ENCODE measurements at regions of chr10 and their contacts with region 1.

Region 1: GRCh38 chr10:26969145-26969926 is 108.6 kb upstream of the ABI1 start:
- DNase-seq: no peak
- H3K4me3 Mint-ChIP-seq: no peak overlapping the region
- H3K27ac Mint-ChIP-seq: peak overlapping the region; percentile 56
- H3K4me1 Mint-ChIP-seq: peaks cover 29% of the 10 kb centered on the region
- H3K27me3 Mint-ChIP-seq: no peaks in the 10 kb centered on the region

Region 2: GRCh38 chr10:27019827-27020226 is 50.5 kb after region 1 on chr10:
- intact Hi-C with region 1: loop called (anchors 5 kb)
- DNase-seq: no peak
- H3K4me3 Mint-ChIP-seq: no peak overlapping the region
- H3K27ac Mint-ChIP-seq: no peak overlapping the region
- H3K4me1 Mint-ChIP-seq: peaks cover 16% of the 10 kb centered on the region
- H3K27me3 Mint-ChIP-seq: no peaks in the 10 kb centered on the region

Region 3: GRCh38 chr10:27035163-27035562 is 65.8 kb after region 1 on chr10:
- intact Hi-C with region 1: loop called (anchors 2 kb)
- DNase-seq: no peak
- H3K4me3 Mint-ChIP-seq: peak overlapping the region; percentile 76
- H3K27ac Mint-ChIP-seq: peak overlapping the region; percentile 79
- H3K4me1 Mint-ChIP-seq: peaks cover 21% of the 10 kb centered on the region
- H3K27me3 Mint-ChIP-seq: no peaks in the 10 kb centered on the region

Region 4: DNA sequence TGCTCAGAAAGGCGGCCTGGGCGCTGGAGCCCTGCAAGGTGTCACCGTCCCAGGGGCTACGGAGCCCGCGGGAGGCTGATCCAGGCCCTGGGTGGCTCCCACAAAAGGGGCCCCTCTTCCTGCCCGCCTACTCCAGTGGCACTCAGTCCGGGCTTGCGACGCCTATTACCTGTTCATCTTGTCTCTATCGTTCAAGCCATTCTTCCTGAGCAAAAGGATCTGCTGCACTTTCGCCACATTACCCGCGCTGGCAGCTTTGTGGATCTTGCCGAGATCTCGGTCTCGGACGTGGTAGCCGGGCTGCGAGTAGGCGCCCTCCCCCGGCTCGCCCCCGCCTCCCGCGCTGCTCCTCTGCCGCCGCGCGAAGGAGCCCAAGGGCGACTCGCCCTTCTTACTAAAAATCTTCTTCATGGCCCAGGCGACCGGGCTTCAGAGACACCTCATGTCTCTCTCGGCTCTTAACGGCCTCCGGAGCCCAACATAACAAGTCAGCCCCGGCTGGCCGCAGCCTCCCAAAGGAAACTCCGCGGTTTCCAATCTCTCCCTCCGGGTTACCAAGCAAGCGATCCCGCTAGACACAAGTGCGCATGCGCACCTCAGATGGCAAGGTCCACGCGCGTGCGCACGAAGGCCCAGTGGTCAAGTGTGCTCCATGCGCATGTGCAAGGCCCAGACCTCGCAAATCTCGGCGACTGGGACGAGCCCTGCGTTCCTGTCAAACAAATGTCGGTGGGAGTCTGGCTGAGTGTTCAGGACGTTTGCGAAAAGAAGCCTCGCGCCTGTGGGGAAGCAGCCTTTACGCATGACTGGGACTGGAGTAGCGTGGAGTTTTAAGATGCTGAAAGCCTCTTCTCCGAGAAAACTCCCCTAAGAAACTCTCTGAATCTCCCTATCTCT is 130.8 kb after region 1 on chr10 and contains the start of gene ANKRD26:
- intact Hi-C with region 1: loop called (anchors 1 kb)
- DNase-seq: peak; percentile 95
- H3K4me3 Mint-ChIP-seq: peak within 1 kb of the TSS; percentile 85
- H3K27ac Mint-ChIP-seq: peak within 1 kb of the TSS; percentile 91
- H3K4me1 Mint-ChIP-seq: peaks cover 34% of the 10 kb centered on the region
- H3K27me3 Mint-ChIP-seq: peaks cover 2% of the 10 kb centered on the region
- total RNA-seq, gene ANKRD26: 5.5 and 6.5 TPM in 2 replicates

Measured in activated T-helper 2 cell treated with anti-CD3 and anti-CD28 coated beads, Interferon-gamma antibody, Interleukin-2, Interleukin-4, amounts not matched to agents 10 μg/mL and 5 μg/mL and 100 μg/mL, durations not matched to agents 14 hours and 24 hours and 36 hours (primary cell).